Heart left ventricle (tissue), 16 donors: ENCODE measurements at regions of chr20 and their contacts with region 1.

Region 1: GRCh38 chr20:15976047-15976731 is 597.1 kb downstream of the KIF16B start:
- DNase-seq: no peak
- ATAC-seq: no peak
- H3K4me3 ChIP-seq: no peak overlapping the region
- H3K27ac ChIP-seq: no peak overlapping the region
- H3K4me1 ChIP-seq: no peaks in the 10 kb centered on the region
- H3K27me3 ChIP-seq: no peaks in the 10 kb centered on the region
- CTCF ChIP-seq: no peak
- POLR2A ChIP-seq: no peak

Region 2: DNA sequence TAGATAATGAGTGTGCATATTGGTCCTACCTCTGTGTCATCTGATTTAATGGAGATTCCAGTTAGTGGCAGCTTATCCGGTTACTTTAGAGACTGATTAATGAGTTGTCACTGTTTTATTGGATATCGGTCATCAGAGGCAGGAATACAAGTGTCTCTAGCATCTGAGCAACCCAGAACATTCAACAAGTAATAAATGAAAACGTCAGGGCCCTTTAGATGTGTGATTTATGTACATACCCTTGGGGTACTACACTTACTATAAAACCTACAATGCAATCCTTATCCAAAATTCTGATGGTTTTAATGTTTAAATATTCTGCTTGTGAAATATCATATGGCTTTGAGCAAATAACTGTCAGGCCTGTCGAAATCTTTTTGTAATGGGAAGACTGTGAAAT is 520.9 kb before region 1 on chr20:
- intact Hi-C with region 1: no loop called
- DNase-seq: no peak
- ATAC-seq: no peak
- H3K4me3 ChIP-seq: no peak overlapping the region
- H3K27ac ChIP-seq: no peak overlapping the region
- H3K4me1 ChIP-seq: no peaks in the 10 kb centered on the region
- H3K27me3 ChIP-seq: no peaks in the 10 kb centered on the region
- CTCF ChIP-seq: no peak
- POLR2A ChIP-seq: no peak

Region 3: GRCh38 chr20:15913391-15914025 is 62.7 kb before region 1 on chr20:
- intact Hi-C with region 1: loop called in 1 of 10 experiments (anchors 10 kb)
- DNase-seq: no peak
- ATAC-seq: no peak
- H3K4me3 ChIP-seq: no peak overlapping the region
- H3K27ac ChIP-seq: no peak overlapping the region
- H3K4me1 ChIP-seq: no peaks in the 10 kb centered on the region
- H3K27me3 ChIP-seq: no peaks in the 10 kb centered on the region
- CTCF ChIP-seq: no peak
- POLR2A ChIP-seq: no peak

Region 4: DNA sequence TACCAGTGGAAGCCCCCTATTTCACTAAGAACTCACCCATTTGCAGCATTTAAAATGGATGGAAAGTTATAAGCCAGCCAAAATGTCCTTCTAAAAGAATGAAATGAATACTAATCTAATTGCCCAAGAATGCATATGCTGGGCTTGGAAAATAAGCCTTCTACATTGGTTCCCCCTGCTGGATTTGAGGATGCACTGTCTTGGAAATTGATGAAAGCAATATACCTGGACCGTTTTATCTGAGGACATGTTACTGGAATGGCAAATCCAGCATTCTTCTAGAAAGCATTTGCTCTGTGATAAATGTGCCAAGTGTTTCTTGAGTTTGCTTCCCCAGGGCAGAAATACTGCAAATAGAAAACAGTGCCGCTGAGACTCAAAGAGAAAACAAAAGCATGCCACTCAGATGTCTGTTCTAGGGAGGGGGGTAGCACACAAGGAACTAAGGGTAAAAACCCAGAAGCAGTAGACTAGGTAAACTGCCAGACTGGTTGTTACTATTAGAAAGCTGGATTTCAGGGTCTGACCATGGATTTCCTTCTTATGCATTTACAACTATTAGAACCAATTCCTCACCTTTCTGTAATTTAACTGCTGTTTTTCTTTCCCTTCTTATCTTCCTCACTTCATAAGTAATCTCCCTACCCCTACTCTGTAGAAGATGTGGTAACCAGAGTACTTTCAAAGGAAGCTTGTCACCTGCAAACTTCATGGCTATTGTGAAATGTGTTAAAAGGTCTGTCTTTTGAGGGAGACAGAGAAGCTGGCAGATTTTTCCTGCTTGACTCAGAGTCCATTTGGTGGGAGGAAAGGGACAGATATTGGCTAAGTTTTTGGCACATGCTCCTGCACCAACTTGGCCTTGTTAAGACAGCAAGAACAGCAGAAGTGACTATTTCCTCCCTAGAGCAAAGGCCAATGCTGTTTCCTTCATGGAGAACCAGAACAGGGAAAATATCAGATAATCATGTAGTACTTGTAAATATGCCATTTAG is 45.6 kb before region 1 on chr20:
- intact Hi-C with region 1: no loop called
- DNase-seq: no peak
- ATAC-seq: no peak
- H3K4me3 ChIP-seq: no peak overlapping the region
- H3K27ac ChIP-seq: no peak overlapping the region
- H3K4me1 ChIP-seq: no peaks in the 10 kb centered on the region
- H3K27me3 ChIP-seq: no peaks in the 10 kb centered on the region
- CTCF ChIP-seq: peak in 6 of 12 donors; percentile 8 to 29 (median 19)
- POLR2A ChIP-seq: no peak